Naive thymus-derived CD4-positive, alpha-beta T cell (primary cell): ENCODE measurements at regions of chr6 and their contacts with region 1.

Region 1: GRCh38 chr6:108558372-108559096 is 2.2 kb upstream of the FOXO3 start:
- DNase-seq: peak; percentile 91 to 98 (median 97)
- ATAC-seq: peak; percentile 75
- H3K4me3 ChIP-seq: peak overlapping the region; percentile 75
- H3K4me3 Mint-ChIP-seq: peak overlapping the region; percentile 88 to 98 (median 97)
- H3K27ac ChIP-seq: peak overlapping the region; percentile 100
- H3K27ac Mint-ChIP-seq: peak overlapping the region; percentile 87 to 99 (median 97)
- H3K4me1 ChIP-seq: peaks cover 12 to 13% of the 10 kb centered on the region in 2 donors
- H3K4me1 Mint-ChIP-seq: peaks cover 16 to 28% (median 20%) of the 10 kb centered on the region in 7 donors
- H3K27me3 ChIP-seq: no peaks in the 10 kb centered on the region
- H3K27me3 Mint-ChIP-seq: peaks cover 0 to 55% (median 6%) of the 10 kb centered on the region in 5 donors

Region 2: DNA sequence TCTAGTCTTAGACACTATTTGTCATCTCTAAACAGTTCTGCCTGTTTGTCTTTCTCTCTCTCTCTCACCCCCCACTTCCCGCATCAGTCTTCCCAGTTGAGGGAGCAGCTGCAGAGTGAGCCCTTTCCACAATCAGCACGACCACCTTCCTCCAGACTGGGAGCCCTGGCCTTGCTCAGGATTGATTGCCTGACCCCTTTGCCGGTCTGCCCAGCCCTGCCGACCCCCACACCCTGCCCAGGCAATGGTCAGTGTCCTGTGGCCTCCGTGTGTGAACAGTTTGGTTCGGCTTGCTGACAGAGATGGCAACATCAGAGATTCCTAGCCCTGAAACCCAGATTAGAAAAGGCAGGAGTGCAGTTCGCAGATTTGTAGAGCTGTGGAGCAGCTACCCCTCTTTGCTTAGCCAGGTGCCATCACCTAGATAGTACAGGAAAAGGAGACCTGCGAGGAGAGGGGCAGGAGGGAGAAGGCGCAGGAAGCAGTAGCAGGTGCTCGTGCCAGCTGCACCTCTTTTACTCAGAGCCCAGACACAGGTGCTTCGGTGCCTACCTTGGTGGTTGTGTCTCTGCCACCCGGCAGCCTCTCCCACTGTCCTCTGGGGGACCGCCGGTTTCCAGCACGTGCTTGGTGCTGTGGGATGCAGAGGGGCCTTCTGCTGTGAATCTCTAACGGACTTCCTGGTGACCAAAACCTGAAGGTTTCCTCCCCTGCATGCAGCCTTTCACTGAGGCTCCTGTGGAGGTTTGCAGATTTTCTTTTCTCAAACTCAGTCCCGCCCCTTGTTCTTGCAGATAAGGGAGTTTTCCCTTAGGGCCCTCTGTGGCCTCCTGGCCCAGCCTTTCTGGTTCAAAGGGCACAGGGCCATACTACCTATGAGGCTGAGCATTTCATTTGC is 826.9 kb before region 1 on chr6:
- CTCF ChIA-PET with region 1: no interaction called
- POLR2A ChIA-PET with region 1: no interaction called
- intact Hi-C with region 1: loop called in 1 of 2 experiments (anchors 2 kb)
- DNase-seq: peak in 7 of 9 donors; percentile 45 to 64 (median 58)
- ATAC-seq: peak; percentile 53
- H3K4me3 ChIP-seq: peak overlapping the region; percentile 68
- H3K4me3 Mint-ChIP-seq: peak overlapping the region; percentile 85 to 99 (median 97)
- H3K27ac ChIP-seq: peak overlapping the region; percentile 77
- H3K27ac Mint-ChIP-seq: peak overlapping the region; percentile 77 to 98 (median 95)
- H3K4me1 ChIP-seq: peaks cover 55 to 65% of the 10 kb centered on the region in 2 donors
- H3K4me1 Mint-ChIP-seq: peaks cover 56 to 86% (median 76%) of the 10 kb centered on the region in 7 donors
- H3K27me3 ChIP-seq: no peaks in the 10 kb centered on the region
- H3K27me3 Mint-ChIP-seq: peaks cover 0 to 13% (median 0%) of the 10 kb centered on the region in 5 donors

Region 3: GRCh38 chr6:108312605-108313004 is 245.9 kb before region 1 on chr6:
- CTCF ChIA-PET with region 1: no interaction called
- POLR2A ChIA-PET with region 1: no interaction called
- intact Hi-C with region 1: no loop called
- DNase-seq: no peak
- ATAC-seq: no peak
- H3K4me3 ChIP-seq: no peak overlapping the region
- H3K4me3 Mint-ChIP-seq: no peak overlapping the region
- H3K27ac ChIP-seq: no peak overlapping the region
- H3K27ac Mint-ChIP-seq: no peak overlapping the region
- H3K4me1 ChIP-seq: no peaks in the 10 kb centered on the region
- H3K4me1 Mint-ChIP-seq: peaks cover 0 to 7% (median 0%) of the 10 kb centered on the region in 7 donors
- H3K27me3 ChIP-seq: no peaks in the 10 kb centered on the region
- H3K27me3 Mint-ChIP-seq: no peaks in the 10 kb centered on the region

Region 4: GRCh38 chr6:108541838-108542759 is 16.4 kb before region 1 on chr6:
- CTCF ChIA-PET with region 1: interaction called, 8 read pairs
- POLR2A ChIA-PET with region 1: interaction called, 3 read pairs
- intact Hi-C with region 1: loop called in 1 of 2 experiments (anchors 1 kb)
- DNase-seq: peak in 8 of 9 donors; percentile 41 to 77 (median 70)
- ATAC-seq: peak; percentile 84
- H3K4me3 ChIP-seq: no peak overlapping the region
- H3K4me3 Mint-ChIP-seq: peak overlapping the region in 7 of 10 donors; percentile 2 to 67 (median 31)
- H3K27ac ChIP-seq: no peak overlapping the region
- H3K27ac Mint-ChIP-seq: peak overlapping the region in 1 of 9 donors; percentile 33
- H3K4me1 ChIP-seq: peaks cover 8 to 11% of the 10 kb centered on the region in 2 donors
- H3K4me1 Mint-ChIP-seq: peaks cover 7 to 18% (median 8%) of the 10 kb centered on the region in 7 donors
- H3K27me3 ChIP-seq: no peaks in the 10 kb centered on the region
- H3K27me3 Mint-ChIP-seq: peaks cover 0 to 52% (median 6%) of the 10 kb centered on the region in 5 donors

Region 5: DNA sequence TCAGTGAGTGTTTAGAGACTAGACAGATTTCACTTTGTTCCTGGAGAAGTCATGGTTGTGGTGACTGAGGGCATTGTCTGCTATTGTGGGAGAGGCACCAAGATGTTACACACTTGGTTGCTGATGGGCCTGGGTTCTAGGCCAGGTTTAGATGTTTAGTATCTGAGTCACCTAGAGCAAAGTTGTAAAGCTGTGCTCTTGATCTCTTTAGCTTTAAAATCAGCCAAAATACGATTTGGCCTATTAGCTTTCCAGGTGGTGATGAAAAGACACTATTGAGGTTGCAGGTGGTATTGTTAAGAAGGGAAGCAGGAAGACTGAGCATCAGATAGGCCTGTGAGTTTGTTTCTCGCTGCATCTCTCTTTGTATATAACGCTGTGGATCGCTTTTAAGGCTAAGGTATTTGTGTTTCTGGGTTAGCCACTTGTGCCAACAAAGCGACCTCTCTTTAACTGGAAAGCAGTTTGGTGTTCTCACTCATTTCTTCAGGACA is 50.8 kb after region 1 on chr6:
- CTCF ChIA-PET with region 1: no interaction called
- POLR2A ChIA-PET with region 1: no interaction called
- intact Hi-C with region 1: no loop called
- DNase-seq: no peak
- ATAC-seq: no peak
- H3K4me3 ChIP-seq: no peak overlapping the region
- H3K4me3 Mint-ChIP-seq: peak overlapping the region in 1 of 10 donors; percentile 9
- H3K27ac ChIP-seq: no peak overlapping the region
- H3K27ac Mint-ChIP-seq: peak overlapping the region in 3 of 9 donors; percentile 3 to 77 (median 52)
- H3K4me1 ChIP-seq: no peaks in the 10 kb centered on the region
- H3K4me1 Mint-ChIP-seq: peaks cover 0 to 72% (median 53%) of the 10 kb centered on the region in 7 donors
- H3K27me3 ChIP-seq: no peaks in the 10 kb centered on the region
- H3K27me3 Mint-ChIP-seq: peaks cover 0 to 14% (median 0%) of the 10 kb centered on the region in 5 donors

Region 6: DNA sequence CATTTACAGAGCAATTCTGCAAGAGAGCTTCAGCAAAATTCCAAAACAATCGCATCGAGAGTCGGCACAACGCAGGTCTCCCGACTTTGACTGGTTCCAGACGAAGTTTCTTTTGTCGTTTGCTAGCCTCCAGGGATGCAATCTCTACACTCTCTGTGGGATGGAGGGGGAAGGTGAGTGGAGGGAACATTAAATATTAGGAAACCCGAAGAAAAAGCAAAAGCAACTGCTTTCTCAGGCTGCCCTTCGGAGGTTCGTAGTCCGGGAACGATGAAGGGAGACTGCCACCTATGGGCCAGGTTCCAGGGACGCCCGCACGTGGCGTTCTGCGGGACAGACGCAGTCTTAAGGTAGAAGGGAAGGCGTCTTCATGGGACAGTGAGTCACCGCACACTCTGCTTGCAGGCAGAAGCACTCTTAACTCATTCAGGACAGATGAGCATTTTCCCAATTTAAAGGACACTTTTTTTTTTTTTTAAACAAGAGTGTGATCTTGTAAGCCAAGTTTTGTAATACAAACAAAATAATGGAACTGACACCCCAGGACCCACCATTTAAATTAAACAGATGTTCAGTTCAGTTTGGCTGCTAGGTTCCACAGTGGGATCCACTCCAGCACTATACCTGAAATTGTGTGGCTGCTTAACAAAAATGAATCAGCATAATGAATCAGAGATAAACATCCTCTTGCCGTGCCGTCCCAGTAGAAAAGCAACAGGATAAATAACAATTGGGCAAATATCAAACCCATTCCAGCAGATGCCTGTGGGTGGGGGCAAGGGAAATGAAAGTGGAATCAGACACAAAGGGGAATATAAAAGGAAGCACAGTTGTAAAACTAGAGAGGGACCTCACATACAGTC is 223.9 kb after region 1 on chr6:
- CTCF ChIA-PET with region 1: interaction called, 3 read pairs
- POLR2A ChIA-PET with region 1: interaction called, 3 read pairs
- intact Hi-C with region 1: loop called (anchors 1 to 5 kb)
- DNase-seq: peak; percentile 56 to 76 (median 71)
- ATAC-seq: peak; percentile 98
- H3K4me3 ChIP-seq: peak overlapping the region; percentile 52
- H3K4me3 Mint-ChIP-seq: peak overlapping the region; percentile 46 to 93 (median 87)
- H3K27ac ChIP-seq: no peak overlapping the region
- H3K27ac Mint-ChIP-seq: peak overlapping the region in 3 of 9 donors; percentile 47 to 64 (median 51)
- H3K4me1 ChIP-seq: no peaks in the 10 kb centered on the region
- H3K4me1 Mint-ChIP-seq: peaks cover 0 to 17% (median 10%) of the 10 kb centered on the region in 7 donors
- H3K27me3 ChIP-seq: no peaks in the 10 kb centered on the region
- H3K27me3 Mint-ChIP-seq: peaks cover 0 to 73% (median 5%) of the 10 kb centered on the region in 5 donors

Region 7: GRCh38 chr6:109073344-109074132 is 515.0 kb after region 1 on chr6:
- CTCF ChIA-PET with region 1: interaction called, 6 read pairs
- POLR2A ChIA-PET with region 1: interaction called, 14 read pairs
- intact Hi-C with region 1: loop called (anchors 1 to 5 kb)
- DNase-seq: peak in 7 of 9 donors; percentile 56 to 78 (median 72)
- ATAC-seq: peak; percentile 85
- H3K4me3 ChIP-seq: no peak overlapping the region
- H3K4me3 Mint-ChIP-seq: peak overlapping the region in 8 of 10 donors; percentile 1 to 64 (median 24)
- H3K27ac ChIP-seq: no peak overlapping the region
- H3K27ac Mint-ChIP-seq: peak overlapping the region in 4 of 9 donors; percentile 1 to 44 (median 4)
- H3K4me1 ChIP-seq: peaks cover 18 to 39% of the 10 kb centered on the region in 2 donors
- H3K4me1 Mint-ChIP-seq: peaks cover 15 to 37% (median 22%) of the 10 kb centered on the region in 7 donors
- H3K27me3 ChIP-seq: no peaks in the 10 kb centered on the region
- H3K27me3 Mint-ChIP-seq: peaks cover 0 to 12% (median 0%) of the 10 kb centered on the region in 5 donors

Region 8: DNA sequence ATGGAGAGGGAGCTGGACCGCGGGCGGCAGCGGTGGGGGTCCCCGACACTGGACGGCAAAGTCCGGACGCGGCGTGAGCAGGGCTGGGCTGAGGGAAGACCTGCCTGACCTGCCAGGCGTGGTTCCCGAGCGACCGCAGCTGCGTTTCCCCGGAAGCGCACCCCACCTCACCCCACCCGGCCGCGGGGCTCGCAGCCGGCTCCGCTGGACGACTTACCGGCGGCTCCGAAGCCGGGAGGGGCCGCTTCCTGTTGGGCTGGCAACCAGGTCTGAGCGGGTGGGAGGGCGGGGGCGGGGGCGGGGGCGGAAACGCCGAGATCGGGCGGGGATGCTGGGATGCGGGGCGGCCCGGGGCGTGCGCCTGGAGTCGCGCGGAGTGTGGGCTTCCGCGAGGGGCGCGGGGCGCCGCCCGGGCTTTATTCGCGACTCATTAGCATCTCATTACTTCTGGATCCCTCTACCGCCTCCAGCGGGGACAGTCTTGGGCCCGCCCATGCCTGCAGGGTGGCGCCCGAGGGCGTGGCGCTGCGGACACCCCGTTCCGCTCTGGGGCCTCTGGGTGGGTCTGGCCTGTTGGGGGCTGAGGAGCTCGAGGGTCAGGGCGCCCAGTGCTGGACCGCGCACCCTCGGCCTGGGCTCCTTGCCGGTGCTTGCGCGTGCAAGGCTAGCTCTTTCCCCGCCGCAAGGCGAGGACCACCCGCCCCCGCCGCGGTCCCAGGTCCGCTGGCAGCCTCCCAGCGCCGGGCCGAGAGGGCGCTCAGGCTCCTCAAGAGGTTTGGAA is 897.2 kb after region 1 on chr6 and contains the start of gene MICAL1:
- CTCF ChIA-PET with region 1: no interaction called
- POLR2A ChIA-PET with region 1: interaction called, 3 read pairs
- intact Hi-C with region 1: loop called in 1 of 2 experiments (anchors 5 kb)
- DNase-seq: peak; percentile 55 to 79 (median 72)
- ATAC-seq: peak; percentile 82
- H3K4me3 ChIP-seq: peak within 1 kb of the TSS; percentile 81
- H3K4me3 Mint-ChIP-seq: peak within 1 kb of the TSS; percentile 95 to 99 (median 97)
- H3K27ac ChIP-seq: peak within 1 kb of the TSS; percentile 94
- H3K27ac Mint-ChIP-seq: peak within 1 kb of the TSS; percentile 83 to 99 (median 97)
- H3K4me1 ChIP-seq: peaks cover 40 to 45% of the 10 kb centered on the region in 2 donors
- H3K4me1 Mint-ChIP-seq: peaks cover 29 to 68% (median 62%) of the 10 kb centered on the region in 7 donors
- H3K27me3 ChIP-seq: no peaks in the 10 kb centered on the region
- H3K27me3 Mint-ChIP-seq: no peaks in the 10 kb centered on the region
- total RNA-seq, gene MICAL1: 61.4 to 125 (median 78.7) TPM